Sciatic nerve (tissue), 2 donors: ENCODE measurements at regions of chr18 and their contacts with region 1.

Region 1: GRCh38 chr18:39624934-39625333 is 2059.3 kb upstream of the CELF4 start:
- DNase-seq: no peak
- ATAC-seq: no peak

Region 2: DNA sequence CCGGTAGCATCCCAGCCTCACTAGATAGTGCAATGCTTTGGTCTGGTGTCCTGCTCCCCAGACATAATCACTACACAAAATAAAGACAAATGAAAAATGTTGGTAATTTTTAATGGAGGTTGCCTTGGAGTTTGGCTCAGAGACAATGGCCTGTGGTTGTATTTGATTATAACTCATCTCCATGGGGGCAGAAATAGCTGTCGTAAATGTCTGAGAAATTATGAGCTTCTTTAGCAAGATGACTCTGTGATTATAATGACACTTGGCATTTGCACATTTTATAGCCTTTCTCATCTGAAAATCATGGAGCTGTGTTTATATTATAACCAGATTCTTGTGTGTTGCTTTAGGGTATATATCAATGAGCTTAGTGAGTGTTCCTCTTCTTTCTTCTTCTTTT is 279.6 kb before region 1 on chr18:
- intact Hi-C with region 1: loop called (anchors 10 kb)
- DNase-seq: no peak
- ATAC-seq: no peak

Region 3: GRCh38 chr18:40313030-40313642 is 688.2 kb after region 1 on chr18:
- intact Hi-C with region 1: no loop called
- DNase-seq: no peak
- ATAC-seq: no peak